HCT116 (cell line): ENCODE measurements at regions of chr2 and their contacts with region 1.

Region 1: GRCh38 chr2:216034065-216034464 is 20.7 kb upstream of the MREG start:
- DNase-seq: peak; percentile 54
- ATAC-seq: peak; percentile 92
- H3K4me3 ChIP-seq: no peak overlapping the region
- H3K27ac ChIP-seq: no peak overlapping the region
- H3K4me1 ChIP-seq: no peaks in the 10 kb centered on the region
- H3K27me3 ChIP-seq: no peaks in the 10 kb centered on the region
- CTCF ChIP-seq: peak; percentile 47 to 94 (median 91); a peak in 5 of 6 replicates
- POLR2A ChIP-seq: no peak
- RAD21 ChIP-seq: peak; percentile 57

Region 2: GRCh38 chr2:216023055-216023648 is 10.9 kb before region 1 on chr2:
- CTCF ChIA-PET with region 1: interaction called, 10 read pairs
- POLR2A ChIA-PET with region 1: no interaction called
- RAD21 ChIA-PET with region 1: no interaction called
- intact Hi-C with region 1: no loop called
- DNase-seq: peak; percentile 42
- ATAC-seq: peak; percentile 96
- H3K4me3 ChIP-seq: no peak overlapping the region
- H3K27ac ChIP-seq: no peak overlapping the region
- H3K4me1 ChIP-seq: no peaks in the 10 kb centered on the region
- H3K27me3 ChIP-seq: no peaks in the 10 kb centered on the region
- CTCF ChIP-seq: peak; percentile 73 to 76 (median 74); a peak in 5 of 6 replicates
- POLR2A ChIP-seq: no peak
- RAD21 ChIP-seq: peak; percentile 58